ENCODE measurements at regions of chr11 and their contacts with region 1.

Region 1: DNA sequence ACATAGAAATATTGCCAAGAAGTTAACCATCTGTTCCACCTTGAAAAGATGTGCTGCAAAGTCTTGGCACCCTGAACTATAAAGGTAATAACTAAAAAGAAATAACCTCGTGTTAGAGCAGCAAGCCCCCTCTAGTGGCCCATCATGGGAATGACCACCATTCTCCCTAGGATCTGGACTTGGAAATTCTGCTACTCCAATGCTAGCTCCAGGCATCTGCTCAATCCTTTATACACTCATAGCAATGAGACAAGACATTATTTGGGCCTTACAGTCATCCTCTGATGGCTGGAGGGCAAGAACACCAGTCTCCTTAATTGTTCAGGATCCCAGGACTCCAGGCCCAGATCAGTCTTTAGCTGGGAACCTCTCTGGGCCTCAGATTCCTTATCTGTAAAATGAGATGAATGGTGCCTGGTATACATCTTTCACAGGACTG is 76.0 kb downstream of the CWC15 start:
- DNase-seq: no peak
- H3K4me3 ChIP-seq: no peak overlapping the region
- H3K27ac ChIP-seq: no peak overlapping the region
- H3K4me1 ChIP-seq: no peaks in the 10 kb centered on the region
- H3K27me3 ChIP-seq: no peaks in the 10 kb centered on the region
- CTCF ChIP-seq: peak in 10 of 11 experiments; percentile 46 to 91 (median 78)
- POLR2A ChIP-seq: no peak

Region 2: GRCh38 chr11:94623120-94623735 is 274.1 kb before region 1 on chr11:
- intact Hi-C with region 1: loop called (anchors 5 kb)
- DNase-seq: no peak
- H3K4me3 ChIP-seq: no peak overlapping the region
- H3K27ac ChIP-seq: no peak overlapping the region
- H3K4me1 ChIP-seq: peaks cover 0 to 10% (median 0%) of the 10 kb centered on the region in 6 donors
- H3K27me3 ChIP-seq: no peaks in the 10 kb centered on the region
- CTCF ChIP-seq: peak; percentile 32 to 86 (median 65)
- POLR2A ChIP-seq: no peak

Region 3: DNA sequence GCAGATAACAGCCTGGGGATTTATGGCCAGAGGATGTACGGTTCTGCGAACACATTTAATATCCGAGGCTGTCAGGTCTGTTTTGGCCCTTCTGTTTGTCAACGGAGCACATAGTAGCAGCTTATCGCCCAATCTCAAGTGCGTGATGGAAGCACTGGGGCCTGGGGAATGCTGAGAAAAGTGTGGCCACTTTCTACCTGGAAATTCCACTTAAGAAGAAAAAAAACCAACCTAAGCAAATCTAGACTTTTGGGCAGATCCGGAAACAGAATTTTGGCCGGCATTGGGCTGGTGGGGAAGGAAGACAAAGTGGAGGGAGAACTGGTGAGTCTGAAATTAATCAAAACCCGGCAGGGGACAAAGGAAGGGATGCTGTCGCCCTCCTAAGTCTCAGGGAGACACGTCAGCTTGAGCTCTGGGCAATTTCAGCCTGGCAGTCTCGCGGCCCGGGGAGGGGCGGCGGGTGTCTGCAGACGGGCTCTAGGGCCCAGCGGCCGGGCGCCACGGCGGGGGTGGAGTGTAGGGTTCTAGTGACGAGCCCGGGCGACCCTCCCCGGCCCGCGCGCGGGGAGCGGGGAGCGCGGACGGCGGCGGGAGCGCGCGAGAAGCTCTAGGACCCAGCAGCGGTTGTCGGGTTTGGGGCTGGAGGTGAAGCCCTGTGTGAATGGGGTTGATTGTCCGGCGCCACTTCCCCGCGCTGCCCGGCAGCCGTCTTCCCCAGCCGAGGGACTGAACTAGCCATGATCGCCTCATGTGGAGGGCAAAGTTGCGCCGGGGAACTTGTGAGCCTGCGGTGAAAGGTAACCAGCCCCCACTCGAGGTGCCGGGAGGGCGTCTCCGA is 129.4 kb before region 1 on chr11 and contains the start of gene AMOTL1:
- intact Hi-C with region 1: loop called (anchors 10 kb)
- DNase-seq: peak; percentile 92
- H3K4me3 ChIP-seq: peak within 1 kb of the TSS; percentile 38 to 81 (median 62)
- H3K27ac ChIP-seq: peak within 1 kb of the TSS; percentile 83 to 96 (median 92)
- H3K4me1 ChIP-seq: peaks cover 3 to 39% (median 26%) of the 10 kb centered on the region in 6 donors
- H3K27me3 ChIP-seq: peaks cover 0 to 35% (median 15%) of the 10 kb centered on the region in 7 donors
- CTCF ChIP-seq: no peak
- POLR2A ChIP-seq: no peak
- total RNA-seq, gene AMOTL1: 24.8 to 43.9 (median 32.3) TPM

Region 4: GRCh38 chr11:94958121-94958696 is 60.9 kb after region 1 on chr11:
- intact Hi-C with region 1: no loop called
- DNase-seq: no peak
- H3K4me3 ChIP-seq: no peak overlapping the region
- H3K27ac ChIP-seq: no peak overlapping the region
- H3K4me1 ChIP-seq: no peaks in the 10 kb centered on the region
- H3K27me3 ChIP-seq: no peaks in the 10 kb centered on the region
- CTCF ChIP-seq: no peak
- POLR2A ChIP-seq: no peak

Region 5: GRCh38 chr11:94997437-94997836 is 100.1 kb after region 1 on chr11:
- intact Hi-C with region 1: no loop called
- DNase-seq: no peak
- H3K4me3 ChIP-seq: no peak overlapping the region
- H3K27ac ChIP-seq: no peak overlapping the region
- H3K4me1 ChIP-seq: no peaks in the 10 kb centered on the region
- H3K27me3 ChIP-seq: no peaks in the 10 kb centered on the region
- CTCF ChIP-seq: peak in 1 of 11 experiments; percentile 8
- POLR2A ChIP-seq: no peak

Measured in spleen (tissue), 13 donors.